Transverse colon (tissue), 4 donors: ENCODE measurements at regions of chr16 and their contacts with region 1.

Region 1: GRCh38 chr16:27449434-27450195 is 47.6 kb downstream of the IL21R start:
- DNase-seq: peak; percentile 59
- H3K4me3 ChIP-seq: no peak overlapping the region
- H3K27ac ChIP-seq: no peak overlapping the region
- H3K4me1 ChIP-seq: no peaks in the 10 kb centered on the region
- H3K27me3 ChIP-seq: peaks cover 22% of the 10 kb centered on the region
- CTCF ChIP-seq: no peak
- EP300 ChIP-seq: no peak
- POLR2A ChIP-seq: no peak

Region 2: GRCh38 chr16:27169511-27170071 is 280.0 kb before region 1 on chr16:
- in situ Hi-C with region 1: loop called in 3 of 4 experiments (anchors 10 kb)
- intact Hi-C with region 1: no loop called
- DNase-seq: peak; percentile 28
- H3K4me3 ChIP-seq: no peak overlapping the region
- H3K27ac ChIP-seq: no peak overlapping the region
- H3K4me1 ChIP-seq: no peaks in the 10 kb centered on the region
- H3K27me3 ChIP-seq: no peaks in the 10 kb centered on the region
- CTCF ChIP-seq: peak in 2 of 5 experiments; percentile 11 to 23
- EP300 ChIP-seq: no peak
- POLR2A ChIP-seq: no peak

Region 3: DNA sequence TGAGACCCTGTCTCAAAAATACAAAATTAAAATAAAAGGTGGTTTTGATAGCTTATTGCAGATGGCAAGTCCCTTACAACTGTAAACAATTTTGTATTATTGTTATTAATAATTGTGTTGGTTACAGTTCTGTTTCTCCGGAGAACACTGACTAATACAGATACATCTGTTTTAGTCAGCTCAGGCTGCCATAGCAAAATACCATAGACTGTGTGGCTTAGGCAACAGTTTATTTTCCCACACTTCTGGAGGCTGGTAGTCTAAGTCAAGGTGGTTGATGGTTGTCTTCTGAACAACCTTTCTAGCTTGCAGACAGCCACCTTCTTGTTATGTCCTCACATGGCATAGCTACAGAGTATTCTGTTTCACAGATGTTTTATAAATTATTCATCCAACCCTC is 61.9 kb before region 1 on chr16:
- in situ Hi-C with region 1: no loop called
- intact Hi-C with region 1: no loop called
- DNase-seq: no peak
- H3K4me3 ChIP-seq: no peak overlapping the region
- H3K27ac ChIP-seq: no peak overlapping the region
- H3K4me1 ChIP-seq: no peaks in the 10 kb centered on the region
- H3K27me3 ChIP-seq: no peaks in the 10 kb centered on the region
- CTCF ChIP-seq: no peak
- EP300 ChIP-seq: no peak
- POLR2A ChIP-seq: no peak

Region 4: GRCh38 chr16:27579087-27579980 is 129.7 kb after region 1 on chr16:
- in situ Hi-C with region 1: no loop called
- intact Hi-C with region 1: no loop called
- DNase-seq: no peak
- H3K4me3 ChIP-seq: no peak overlapping the region
- H3K27ac ChIP-seq: peak overlapping the region in 1 of 4 donors; percentile 35
- H3K4me1 ChIP-seq: peaks cover 0 to 4% (median 0%) of the 10 kb centered on the region in 4 donors
- H3K27me3 ChIP-seq: no peaks in the 10 kb centered on the region
- CTCF ChIP-seq: no peak
- EP300 ChIP-seq: no peak
- POLR2A ChIP-seq: no peak